ENCODE measurements at regions of chr2 and their contacts with region 1.

Region 1: DNA sequence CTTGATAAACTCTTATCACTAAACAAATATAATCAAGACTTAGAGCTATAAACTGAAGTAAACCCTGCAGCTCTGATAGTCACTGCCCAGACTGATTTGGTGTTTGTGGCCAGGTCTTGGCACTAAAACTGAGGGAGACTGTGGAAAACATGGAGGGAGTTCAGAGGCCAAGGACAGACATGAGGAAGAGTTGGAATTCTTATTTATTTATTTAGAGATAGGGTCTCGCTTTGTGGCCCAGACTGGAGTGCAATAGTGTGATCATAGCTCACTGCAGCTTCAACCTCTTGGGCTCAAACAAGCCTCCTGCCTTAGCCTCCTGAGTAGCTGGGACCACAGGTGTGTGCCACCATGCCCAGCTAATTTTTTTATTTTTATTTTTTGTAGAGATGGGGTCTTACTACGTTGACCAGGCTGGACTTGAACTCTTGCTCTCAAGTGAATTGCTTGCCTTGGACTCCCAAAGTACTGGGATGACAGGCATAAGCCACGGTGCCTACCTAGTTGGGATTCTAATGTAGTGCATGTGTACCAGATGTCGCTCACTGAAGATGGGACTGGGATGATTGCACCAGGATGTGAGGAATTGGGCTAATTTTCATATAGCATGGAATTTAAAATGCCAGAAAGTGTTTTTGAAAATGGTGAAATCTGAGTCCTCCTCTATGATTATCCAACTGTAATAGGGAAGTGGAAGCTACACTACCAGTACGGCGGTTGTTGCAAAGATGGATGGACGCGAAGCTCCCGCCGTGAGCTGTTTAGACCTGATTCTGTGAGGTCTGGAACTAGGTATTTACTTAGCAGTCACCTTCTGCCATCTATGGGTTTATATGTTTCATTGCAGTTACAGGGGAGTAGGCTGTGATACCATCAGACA is 52.7 kb upstream of the CTLA4 start:
- DNase-seq: peak; percentile 77
- ATAC-seq: peak; percentile 64
- H3K4me3 ChIP-seq: peak overlapping the region; percentile 58; the same call in 1 of the 2 replicates
- H3K27ac ChIP-seq: no peak overlapping the region
- H3K4me1 ChIP-seq: peaks cover 28% of the 10 kb centered on the region
- H3K27me3 ChIP-seq: no peaks in the 10 kb centered on the region
- CTCF ChIP-seq: peak; percentile 84

Region 2: GRCh38 chr2:202577250-202578183 is 1237.4 kb before region 1 on chr2:
- CTCF ChIA-PET with region 1: no interaction called
- POLR2A ChIA-PET with region 1: no interaction called
- intact Hi-C with region 1: loop called (anchors 5 kb)
- DNase-seq: no peak
- ATAC-seq: no peak
- H3K4me3 ChIP-seq: no peak overlapping the region
- H3K27ac ChIP-seq: no peak overlapping the region
- H3K4me1 ChIP-seq: no peaks in the 10 kb centered on the region; the same call in 1 of the 2 replicates
- H3K27me3 ChIP-seq: no peaks in the 10 kb centered on the region
- CTCF ChIP-seq: no peak

Region 3: DNA sequence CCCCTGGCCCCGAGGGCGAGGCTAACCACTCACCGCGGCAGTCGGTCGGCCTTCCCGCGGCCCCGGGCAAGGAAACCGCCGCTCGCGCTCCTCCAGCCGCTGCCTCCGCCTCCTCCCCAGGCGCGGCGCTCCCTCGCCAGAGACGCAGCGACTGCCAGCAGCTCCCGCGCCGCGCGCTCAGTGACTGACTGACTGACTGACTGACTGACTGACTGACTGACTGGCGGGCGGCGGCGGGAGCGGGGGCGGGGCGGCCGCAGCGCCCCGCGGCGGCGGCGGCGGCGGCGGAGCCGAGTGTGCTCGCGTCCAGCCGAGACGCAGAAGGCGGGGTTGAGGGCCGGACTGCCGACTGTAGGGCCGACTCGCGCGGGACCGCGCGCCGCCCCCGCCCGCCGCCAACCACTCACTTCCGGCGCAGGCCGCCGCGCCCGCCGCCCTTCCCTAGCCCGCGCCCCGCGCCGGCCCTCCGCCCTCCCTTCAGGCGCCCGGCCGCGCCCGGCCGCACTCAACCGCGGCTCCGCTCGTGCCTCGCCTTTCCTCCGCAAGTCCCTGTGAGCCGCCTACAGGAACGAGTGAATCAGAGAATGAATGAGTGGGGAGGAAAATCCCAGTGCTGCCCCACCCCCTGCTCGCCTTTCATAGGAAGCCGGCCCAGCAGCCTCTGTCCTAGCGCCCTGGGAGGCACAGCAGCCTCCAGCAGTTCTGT is 279.7 kb before region 1 on chr2 and contains the start of gene RAPH1:
- CTCF ChIA-PET with region 1: no interaction called
- POLR2A ChIA-PET with region 1: interaction called, 4 read pairs
- intact Hi-C with region 1: loop called (anchors 1 kb)
- DNase-seq: peak; percentile 89
- ATAC-seq: peak; percentile 82
- H3K4me3 ChIP-seq: peak within 1 kb of the TSS; percentile 93
- H3K27ac ChIP-seq: peak within 1 kb of the TSS; percentile 29
- H3K4me1 ChIP-seq: peaks cover 18% of the 10 kb centered on the region
- H3K27me3 ChIP-seq: no peaks in the 10 kb centered on the region
- CTCF ChIP-seq: no peak
- total RNA-seq, gene RAPH1: 7.0 and 40.3 TPM in 2 replicates

Region 4: GRCh38 chr2:203673933-203674332 is 141.0 kb before region 1 on chr2:
- CTCF ChIA-PET with region 1: no interaction called
- POLR2A ChIA-PET with region 1: no interaction called
- intact Hi-C with region 1: no loop called
- DNase-seq: no peak
- ATAC-seq: no peak
- H3K4me3 ChIP-seq: no peak overlapping the region
- H3K27ac ChIP-seq: no peak overlapping the region
- H3K4me1 ChIP-seq: no peaks in the 10 kb centered on the region
- H3K27me3 ChIP-seq: no peaks in the 10 kb centered on the region
- CTCF ChIP-seq: no peak

Region 5: DNA sequence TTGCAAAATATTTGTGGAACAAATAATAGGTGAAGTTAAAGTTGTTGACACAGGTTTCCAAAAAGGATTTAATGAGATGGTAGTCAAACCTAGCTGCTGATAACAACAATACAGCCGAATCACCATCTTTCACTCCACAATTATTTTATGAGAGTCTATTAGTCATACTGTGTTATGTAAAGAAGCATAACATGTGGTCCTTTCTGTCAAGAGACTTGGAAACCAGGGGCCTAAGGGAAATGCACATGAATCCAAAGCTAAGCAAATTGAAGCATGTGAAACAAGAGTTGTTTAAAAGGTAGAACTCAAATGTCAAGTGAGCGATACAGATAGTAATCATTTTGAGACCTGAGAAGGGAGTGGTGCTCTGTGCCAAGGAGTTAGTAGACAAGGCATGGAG is 92.5 kb before region 1 on chr2:
- CTCF ChIA-PET with region 1: no interaction called
- POLR2A ChIA-PET with region 1: no interaction called
- intact Hi-C with region 1: loop called (anchors 5 kb)
- DNase-seq: peak; percentile 54
- ATAC-seq: peak; percentile 84
- H3K4me3 ChIP-seq: no peak overlapping the region
- H3K27ac ChIP-seq: no peak overlapping the region
- H3K4me1 ChIP-seq: peaks cover 10% of the 10 kb centered on the region; the same call in 1 of the 2 replicates
- H3K27me3 ChIP-seq: no peaks in the 10 kb centered on the region
- CTCF ChIP-seq: no peak

Region 6: GRCh38 chr2:203897544-203897943 is 82.6 kb after region 1 on chr2:
- CTCF ChIA-PET with region 1: no interaction called
- POLR2A ChIA-PET with region 1: no interaction called
- intact Hi-C with region 1: no loop called
- DNase-seq: no peak
- ATAC-seq: no peak
- H3K4me3 ChIP-seq: no peak overlapping the region
- H3K27ac ChIP-seq: no peak overlapping the region
- H3K4me1 ChIP-seq: peaks cover 5% of the 10 kb centered on the region; the same call in 1 of the 2 replicates
- H3K27me3 ChIP-seq: peaks cover 5% of the 10 kb centered on the region; the same call in 1 of the 2 replicates
- CTCF ChIP-seq: no peak

Region 7: GRCh38 chr2:203909261-203909967 is 94.5 kb after region 1 on chr2:
- CTCF ChIA-PET with region 1: interaction called, 4 read pairs
- POLR2A ChIA-PET with region 1: no interaction called
- intact Hi-C with region 1: loop called (anchors 1 kb)
- DNase-seq: peak; percentile 67
- ATAC-seq: peak; percentile 86
- H3K4me3 ChIP-seq: peak overlapping the region; percentile 44
- H3K27ac ChIP-seq: no peak overlapping the region
- H3K4me1 ChIP-seq: peaks cover 11% of the 10 kb centered on the region; the same call in 1 of the 2 replicates
- H3K27me3 ChIP-seq: peaks cover 6% of the 10 kb centered on the region; the same call in 1 of the 2 replicates
- CTCF ChIP-seq: peak; percentile 90

Measured in PC-3 (cell line).